ENCODE measurements at regions of chr3 and their contacts with region 1.

Region 1: GRCh38 chr3:184543843-184544512 is 17.6 kb upstream of the EPHB3 start:
- DNase-seq: peak; percentile 83
- ATAC-seq: peak; percentile 89
- H3K4me3 Mint-ChIP-seq: no peak overlapping the region
- H3K27ac Mint-ChIP-seq: no peak overlapping the region
- H3K4me1 Mint-ChIP-seq: peaks cover 4% of the 10 kb centered on the region
- H3K27me3 Mint-ChIP-seq: peaks cover 28% of the 10 kb centered on the region
- CTCF ChIP-seq: peak; percentile 86

Region 2: DNA sequence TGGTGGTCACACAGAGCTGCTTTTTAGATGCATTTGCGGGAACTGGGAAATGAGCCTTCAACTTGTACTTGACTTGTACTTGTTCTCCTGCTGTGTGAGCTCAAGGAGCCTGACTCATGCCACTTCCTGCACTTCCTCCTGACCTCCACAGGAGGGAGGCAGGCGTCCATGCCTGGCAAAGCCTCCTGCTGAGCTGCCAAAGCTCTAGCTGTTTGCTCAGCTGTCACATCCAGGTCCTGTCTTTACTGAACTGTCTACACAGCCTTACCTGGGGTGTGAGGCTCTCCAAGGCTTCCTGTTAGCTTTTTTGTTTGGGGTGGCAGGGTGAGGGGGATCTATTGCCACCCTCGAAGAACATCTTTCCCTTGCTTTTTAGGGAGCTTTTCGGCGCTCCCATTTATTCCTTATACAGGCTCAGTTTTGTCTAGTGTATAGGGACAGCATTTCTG is 172.4 kb before region 1 on chr3:
- CTCF ChIA-PET with region 1: interaction called, 104 read pairs
- POLR2A ChIA-PET with region 1: interaction called, 3 read pairs
- intact Hi-C with region 1: no loop called
- DNase-seq: peak; percentile 77
- ATAC-seq: peak; percentile 99
- H3K4me3 Mint-ChIP-seq: no peak overlapping the region
- H3K27ac Mint-ChIP-seq: no peak overlapping the region
- H3K4me1 Mint-ChIP-seq: peaks cover 10% of the 10 kb centered on the region
- H3K27me3 Mint-ChIP-seq: no peaks in the 10 kb centered on the region
- CTCF ChIP-seq: peak; percentile 81

Region 3: GRCh38 chr3:184423561-184423960 is 120.4 kb before region 1 on chr3:
- CTCF ChIA-PET with region 1: interaction called, 16 read pairs
- POLR2A ChIA-PET with region 1: interaction called, 3 read pairs
- intact Hi-C with region 1: loop called (anchors 2 kb)
- DNase-seq: no peak
- ATAC-seq: no peak
- H3K4me3 Mint-ChIP-seq: no peak overlapping the region
- H3K27ac Mint-ChIP-seq: no peak overlapping the region
- H3K4me1 Mint-ChIP-seq: no peaks in the 10 kb centered on the region
- H3K27me3 Mint-ChIP-seq: peaks cover 5% of the 10 kb centered on the region
- CTCF ChIP-seq: no peak

Region 4: DNA sequence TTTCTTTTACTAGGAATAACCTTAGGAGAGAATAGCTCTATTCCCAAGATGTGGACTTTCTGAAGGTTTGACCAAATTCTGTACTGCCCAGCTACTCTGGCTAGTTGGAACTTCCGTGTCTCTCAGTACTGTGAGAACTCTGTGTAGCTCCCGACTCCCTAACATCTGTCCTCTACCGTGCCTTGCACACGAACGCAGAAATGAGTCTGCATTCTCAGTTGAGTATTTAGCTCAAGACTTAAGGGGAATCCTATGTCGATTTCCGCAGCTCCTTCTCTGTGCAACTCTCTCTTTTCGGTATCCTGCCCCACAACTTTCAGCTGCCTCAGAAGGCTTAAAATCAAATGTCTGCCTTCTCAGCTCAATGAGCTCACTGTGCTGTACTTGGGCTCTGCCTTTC is 69.1 kb before region 1 on chr3:
- CTCF ChIA-PET with region 1: interaction called, 21 read pairs
- POLR2A ChIA-PET with region 1: no interaction called
- intact Hi-C with region 1: no loop called
- DNase-seq: no peak
- ATAC-seq: no peak
- H3K4me3 Mint-ChIP-seq: no peak overlapping the region
- H3K27ac Mint-ChIP-seq: no peak overlapping the region
- H3K4me1 Mint-ChIP-seq: peaks cover 20% of the 10 kb centered on the region
- H3K27me3 Mint-ChIP-seq: peaks cover 30% of the 10 kb centered on the region
- CTCF ChIP-seq: no peak

Region 5: DNA sequence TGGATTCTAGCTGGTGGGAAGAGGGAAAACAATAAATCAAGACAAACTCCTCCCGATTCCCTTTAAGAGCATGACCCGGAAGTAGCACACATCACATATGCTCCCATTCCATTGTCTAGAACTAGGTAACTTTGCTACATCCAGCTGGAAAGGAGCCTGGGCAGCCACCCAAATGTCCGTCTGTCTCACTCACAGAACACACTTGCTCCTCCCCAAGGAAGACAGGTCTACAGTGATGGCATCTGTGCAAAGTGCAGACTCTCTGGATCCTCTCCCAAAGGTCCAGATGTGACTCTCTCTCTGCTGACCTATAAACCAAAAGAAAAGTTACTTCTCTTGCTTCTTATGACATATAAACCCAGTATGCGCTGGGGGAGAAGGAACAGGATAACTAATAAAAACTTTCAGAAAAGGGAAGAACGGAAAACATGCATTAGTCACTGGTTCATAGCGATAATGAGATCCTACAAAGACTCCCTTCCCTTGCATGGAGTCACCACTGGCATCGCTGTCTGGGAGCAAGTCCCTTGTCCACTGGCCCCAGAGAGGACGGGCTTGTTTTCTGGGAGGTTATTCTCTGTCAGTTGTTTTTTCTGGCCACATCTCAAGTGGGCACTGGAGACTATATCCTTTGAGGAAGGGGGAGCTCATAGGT is 12.2 kb before region 1 on chr3:
- CTCF ChIA-PET with region 1: interaction called, 43 read pairs
- POLR2A ChIA-PET with region 1: no interaction called
- intact Hi-C with region 1: no loop called
- DNase-seq: no peak
- ATAC-seq: no peak
- H3K4me3 Mint-ChIP-seq: no peak overlapping the region
- H3K27ac Mint-ChIP-seq: no peak overlapping the region
- H3K4me1 Mint-ChIP-seq: no peaks in the 10 kb centered on the region
- H3K27me3 Mint-ChIP-seq: peaks cover 16% of the 10 kb centered on the region
- CTCF ChIP-seq: no peak

Measured in activated CD8-positive, alpha-beta T cell treated with anti-CD3 and anti-CD28 coated beads for 36 hours (primary cell).